Activated naive CD4-positive, alpha-beta T cell treated with anti-CD3 and anti-CD28 coated beads for 36 hours (primary cell): ENCODE measurements at regions of chr9 and their contacts with region 1.

Region 1: GRCh38 chr9:84387821-84388220 is 47.3 kb upstream of the SLC28A3 start:
- DNase-seq: no peak
- H3K4me3 Mint-ChIP-seq: no peak overlapping the region
- H3K27ac Mint-ChIP-seq: no peak overlapping the region
- H3K4me1 Mint-ChIP-seq: no peaks in the 10 kb centered on the region
- H3K27me3 Mint-ChIP-seq: peaks cover 5% of the 10 kb centered on the region

Region 2: GRCh38 chr9:84354035-84354434 is 33.8 kb before region 1 on chr9:
- CTCF ChIA-PET with region 1: interaction called, 3 read pairs
- intact Hi-C with region 1: loop called (anchors 1 kb)
- DNase-seq: no peak
- H3K4me3 Mint-ChIP-seq: no peak overlapping the region
- H3K27ac Mint-ChIP-seq: no peak overlapping the region
- H3K4me1 Mint-ChIP-seq: no peaks in the 10 kb centered on the region
- H3K27me3 Mint-ChIP-seq: no peaks in the 10 kb centered on the region

Region 3: GRCh38 chr9:84642553-84643141 is 254.8 kb after region 1 on chr9:
- CTCF ChIA-PET with region 1: no interaction called
- intact Hi-C with region 1: no loop called
- DNase-seq: no peak
- H3K4me3 Mint-ChIP-seq: no peak overlapping the region
- H3K27ac Mint-ChIP-seq: no peak overlapping the region
- H3K4me1 Mint-ChIP-seq: no peaks in the 10 kb centered on the region
- H3K27me3 Mint-ChIP-seq: no peaks in the 10 kb centered on the region